GM12878 (cell line): ENCODE measurements at regions of chr14 and their contacts with region 1.

Region 1: GRCh38 chr14:94009767-94010166 is 12.7 kb downstream of the CCDC197 start:
- DNase-seq: peak; percentile 25
- ATAC-seq: peak; percentile 86
- H3K4me3 ChIP-seq: no peak overlapping the region; the same call in 1 of the 2 replicates
- H3K27ac ChIP-seq: peak overlapping the region; percentile 20; the same call in 1 of the 2 replicates
- H3K4me1 ChIP-seq: peaks cover 36% of the 10 kb centered on the region
- H3K27me3 ChIP-seq: no peaks in the 10 kb centered on the region
- CTCF ChIP-seq: no peak
- EP300 ChIP-seq: peak; percentile 10 to 57; a peak in 1 of 4 replicates
- POLR2A ChIP-seq: no peak
- RAD21 ChIP-seq: no peak

Region 2: DNA sequence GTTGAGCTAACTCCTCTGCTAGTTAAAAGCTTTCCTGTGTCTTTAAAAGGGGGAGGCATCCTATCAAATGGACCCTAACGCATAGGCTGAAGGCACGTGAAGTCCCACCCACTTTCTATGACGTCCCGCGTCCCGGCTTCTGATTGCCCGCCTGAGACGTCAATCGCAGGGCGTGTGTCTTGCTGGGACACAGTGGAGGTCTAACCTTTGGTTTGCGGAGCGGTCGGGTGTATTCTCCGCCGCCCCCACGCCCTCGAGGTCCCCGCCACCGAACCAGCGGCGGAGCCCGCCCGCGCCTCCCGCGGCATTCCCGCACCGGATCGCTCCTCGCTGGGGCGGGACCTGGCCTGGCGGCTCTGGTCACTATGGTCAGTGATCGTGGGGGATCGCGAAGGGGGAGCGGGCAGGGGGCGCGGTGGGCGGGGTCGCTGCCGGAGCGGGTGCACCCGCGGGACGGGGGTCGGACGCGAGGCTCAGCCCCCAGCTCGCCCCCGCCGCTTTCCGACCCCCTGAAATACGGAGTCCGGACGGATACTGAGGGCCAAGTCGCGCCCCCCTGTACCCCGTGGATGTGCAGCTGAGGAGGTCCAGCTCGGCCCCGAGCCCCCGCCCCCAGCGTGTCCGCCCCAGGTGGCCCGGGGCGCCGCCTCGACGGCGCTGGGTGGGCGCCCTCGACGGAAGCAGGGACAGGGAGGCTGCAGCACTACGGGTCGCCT is 16.6 kb after region 1 on chr14 and contains the start of gene OTUB2:
- CTCF ChIA-PET with region 1: interaction called, 5 read pairs
- POLR2A ChIA-PET with region 1: interaction called, 3 read pairs
- RAD21 ChIA-PET with region 1: interaction called, 3 read pairs
- SMC1A ChIA-PET with region 1: interaction called, 10 read pairs
- in situ Hi-C with region 1: no loop called
- intact Hi-C with region 1: no loop called
- DNase-seq: peak; percentile 93
- ATAC-seq: peak; percentile 100
- H3K4me3 ChIP-seq: peak within 1 kb of the TSS; percentile 77
- H3K27ac ChIP-seq: no peak within 1 kb of the TSS
- H3K4me1 ChIP-seq: peaks cover 8% of the 10 kb centered on the region
- H3K27me3 ChIP-seq: no peaks in the 10 kb centered on the region
- CTCF ChIP-seq: no peak
- EP300 ChIP-seq: no peak
- POLR2A ChIP-seq: no peak
- RAD21 ChIP-seq: no peak
- polyA plus RNA-seq, gene OTUB2: 0.05 to 0.18 TPM

Region 3: GRCh38 chr14:94173885-94174603 is 164.3 kb after region 1 on chr14 and contains the start of gene PPP4R4:
- CTCF ChIA-PET with region 1: no interaction called
- POLR2A ChIA-PET with region 1: no interaction called
- RAD21 ChIA-PET with region 1: no interaction called
- SMC1A ChIA-PET with region 1: no interaction called
- in situ Hi-C with region 1: no loop called
- intact Hi-C with region 1: no loop called
- DNase-seq: no peak
- ATAC-seq: peak; percentile 94
- H3K4me3 ChIP-seq: peak within 1 kb of the TSS; percentile 77
- H3K27ac ChIP-seq: no peak within 1 kb of the TSS
- H3K4me1 ChIP-seq: no peaks in the 10 kb centered on the region; the same call in 1 of the 2 replicates
- H3K27me3 ChIP-seq: peaks cover 0 to 25% of the 10 kb centered on the region in 2 experiments; a peak in 2 of 4 replicates
- CTCF ChIP-seq: no peak
- EP300 ChIP-seq: no peak
- POLR2A ChIP-seq: no peak; the same call in 1 of the 2 replicates
- RAD21 ChIP-seq: no peak
- polyA plus RNA-seq, gene PPP4R4: 0.02 TPM in 1 of 2 experiments, not detected in the other